Gastrocnemius medialis (tissue), 4 donors: ENCODE measurements at regions of chr20 and their contacts with region 1.

Region 1: DNA sequence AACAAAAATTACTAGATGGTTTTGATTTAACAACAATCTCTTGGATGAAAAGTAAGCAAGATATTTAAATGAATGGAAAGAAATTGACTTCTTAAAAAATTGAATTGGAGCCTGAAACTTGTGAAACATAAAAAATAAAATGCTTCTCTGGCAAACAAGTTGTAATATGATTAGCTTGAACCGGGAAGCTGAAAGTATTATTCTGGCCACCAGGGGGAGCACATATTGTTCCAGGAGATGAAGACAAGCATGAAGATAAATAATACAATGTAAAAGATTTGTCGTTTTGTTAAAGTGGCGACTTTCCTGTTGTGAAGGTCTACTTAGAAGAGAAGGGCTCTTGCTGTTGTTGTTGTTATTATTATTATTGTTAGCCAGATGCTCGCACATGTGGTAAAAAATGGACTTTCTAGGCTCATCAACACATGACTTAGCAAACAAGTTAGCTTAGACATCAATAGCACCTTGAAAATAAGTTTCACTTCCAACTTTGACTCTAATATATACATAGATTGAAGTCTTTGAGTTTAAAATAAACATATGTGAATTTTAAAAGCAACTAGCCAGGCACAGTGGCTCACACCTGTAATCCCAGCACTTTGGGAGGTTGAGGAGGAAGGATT is 14.2 kb downstream of the PAX1 start:
- DNase-seq: peak in 1 of 2 donors; percentile 27
- ATAC-seq: peak in 1 of 2 donors; percentile 53
- H3K4me3 ChIP-seq: no peak overlapping the region
- H3K27ac ChIP-seq: no peak overlapping the region
- H3K4me1 ChIP-seq: peaks cover 0 to 6% of the 10 kb centered on the region in 2 donors
- H3K27me3 ChIP-seq: peaks cover 0 to 10% (median 0%) of the 10 kb centered on the region in 3 donors
- CTCF ChIP-seq: peak in 4 of 5 experiments; percentile 39 to 69 (median 51)
- POLR2A ChIP-seq: no peak

Region 2: GRCh38 chr20:22106308-22106938 is 386.7 kb after region 1 on chr20:
- in situ Hi-C with region 1: loop called in 1 of 4 experiments (anchors 25 kb)
- intact Hi-C with region 1: no loop called
- DNase-seq: no peak
- ATAC-seq: no peak
- H3K4me3 ChIP-seq: no peak overlapping the region
- H3K27ac ChIP-seq: no peak overlapping the region
- H3K4me1 ChIP-seq: no peaks in the 10 kb centered on the region
- H3K27me3 ChIP-seq: no peaks in the 10 kb centered on the region
- CTCF ChIP-seq: no peak
- POLR2A ChIP-seq: no peak

Region 3: DNA sequence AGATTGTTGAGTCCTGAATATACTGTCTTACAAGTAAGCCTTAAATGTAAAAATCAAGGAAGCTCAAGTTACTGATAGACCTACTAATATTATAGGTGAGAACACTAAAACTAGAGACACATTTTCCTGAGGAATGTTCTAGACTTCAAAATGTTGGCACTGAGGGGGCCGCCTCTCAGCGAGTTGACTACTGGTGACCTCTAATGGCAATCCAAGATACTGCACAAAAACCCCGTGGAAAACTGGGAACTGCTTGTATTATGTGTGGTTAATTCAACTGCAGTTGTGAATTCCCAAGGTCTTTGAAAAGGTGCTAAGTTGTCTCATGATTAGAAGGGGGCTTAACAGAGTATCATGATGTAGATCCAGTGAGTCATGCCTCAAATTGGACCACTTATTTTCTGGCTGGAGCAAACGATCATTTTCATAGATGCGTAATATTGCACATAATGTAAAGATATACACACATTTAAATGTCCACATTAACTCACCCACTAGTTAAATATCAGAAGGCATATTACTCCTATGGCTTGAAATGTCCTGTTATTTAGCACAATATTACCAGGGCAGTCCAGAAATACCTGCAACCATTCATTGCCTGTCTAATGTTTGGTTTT is 528.5 kb after region 1 on chr20:
- in situ Hi-C with region 1: no loop called
- intact Hi-C with region 1: loop called (anchors 5 kb)
- DNase-seq: no peak
- ATAC-seq: no peak
- H3K4me3 ChIP-seq: no peak overlapping the region
- H3K27ac ChIP-seq: no peak overlapping the region
- H3K4me1 ChIP-seq: no peaks in the 10 kb centered on the region
- H3K27me3 ChIP-seq: no peaks in the 10 kb centered on the region
- CTCF ChIP-seq: peak in 1 of 5 experiments; percentile 37
- POLR2A ChIP-seq: no peak

Region 4: GRCh38 chr20:22312744-22313346 is 593.1 kb after region 1 on chr20:
- in situ Hi-C with region 1: loop called in 2 of 4 experiments (anchors 25 kb)
- intact Hi-C with region 1: no loop called
- DNase-seq: no peak
- ATAC-seq: no peak
- H3K4me3 ChIP-seq: no peak overlapping the region
- H3K27ac ChIP-seq: no peak overlapping the region
- H3K4me1 ChIP-seq: no peaks in the 10 kb centered on the region
- H3K27me3 ChIP-seq: no peaks in the 10 kb centered on the region
- CTCF ChIP-seq: peak in 3 of 5 experiments; percentile 3 to 48 (median 39)
- POLR2A ChIP-seq: no peak